Activated T-helper 2 cell treated with anti-CD3 and anti-CD28 coated beads, Interferon-gamma antibody, Interleukin-2, Interleukin-4, amounts not matched to agents 10 μg/mL and 5 μg/mL and 100 μg/mL, durations not matched to agents 14 hours and 24 hours and 36 hours (primary cell): ENCODE measurements at regions of chr3 and their contacts with region 1.

Region 1: DNA sequence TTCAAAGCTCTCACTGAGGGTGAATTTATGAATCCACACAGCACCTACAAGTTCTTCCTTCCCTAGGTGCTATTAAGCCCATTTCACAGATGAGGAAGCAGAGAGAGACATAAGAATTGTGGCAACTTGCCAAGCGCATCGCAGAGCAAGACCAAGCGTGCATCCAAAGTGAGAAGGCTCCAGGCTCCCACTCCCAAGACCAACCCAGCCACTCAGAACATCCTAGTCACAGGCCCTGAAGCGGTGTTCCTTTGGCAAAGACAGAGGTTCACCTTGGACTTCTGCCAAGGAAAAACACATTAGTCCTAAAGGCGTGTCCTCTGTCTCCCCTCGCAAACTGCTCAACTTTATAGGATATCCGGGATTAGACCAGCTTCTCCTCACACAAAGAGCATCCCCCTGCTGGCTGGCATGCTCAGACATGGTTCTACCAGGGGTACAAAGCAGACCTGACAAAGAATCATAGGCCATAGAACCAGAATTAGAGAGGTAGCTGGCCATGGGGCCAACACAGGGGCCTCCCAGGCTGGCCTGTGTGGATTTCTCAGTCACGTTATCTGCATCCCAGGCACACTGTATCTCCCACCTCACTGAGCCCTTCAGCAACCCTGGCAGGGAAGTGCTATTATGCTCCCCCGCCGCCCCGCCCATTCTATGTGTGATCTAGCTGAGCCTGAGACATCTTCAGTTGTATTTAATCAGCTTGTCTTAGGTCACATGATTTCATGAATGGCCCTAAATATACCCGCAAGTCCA is 160.2 kb downstream of the FOXP1 start:
- DNase-seq: no peak
- H3K4me3 Mint-ChIP-seq: no peak overlapping the region
- H3K27ac Mint-ChIP-seq: peak overlapping the region; percentile 83
- H3K4me1 Mint-ChIP-seq: peaks cover 61% of the 10 kb centered on the region
- H3K27me3 Mint-ChIP-seq: no peaks in the 10 kb centered on the region

Region 2: GRCh38 chr3:71380096-71380495 is 43.2 kb before region 1 on chr3:
- intact Hi-C with region 1: loop called (anchors 2 kb)
- DNase-seq: no peak
- H3K4me3 Mint-ChIP-seq: no peak overlapping the region
- H3K27ac Mint-ChIP-seq: peak overlapping the region; percentile 68
- H3K4me1 Mint-ChIP-seq: peaks cover 56% of the 10 kb centered on the region
- H3K27me3 Mint-ChIP-seq: no peaks in the 10 kb centered on the region

Region 3: GRCh38 chr3:71398157-71398836 is 25.0 kb before region 1 on chr3:
- intact Hi-C with region 1: loop called (anchors 1 kb)
- DNase-seq: no peak
- H3K4me3 Mint-ChIP-seq: no peak overlapping the region
- H3K27ac Mint-ChIP-seq: peak overlapping the region; percentile 50
- H3K4me1 Mint-ChIP-seq: peaks cover 45% of the 10 kb centered on the region
- H3K27me3 Mint-ChIP-seq: peaks cover 10% of the 10 kb centered on the region

Region 4: DNA sequence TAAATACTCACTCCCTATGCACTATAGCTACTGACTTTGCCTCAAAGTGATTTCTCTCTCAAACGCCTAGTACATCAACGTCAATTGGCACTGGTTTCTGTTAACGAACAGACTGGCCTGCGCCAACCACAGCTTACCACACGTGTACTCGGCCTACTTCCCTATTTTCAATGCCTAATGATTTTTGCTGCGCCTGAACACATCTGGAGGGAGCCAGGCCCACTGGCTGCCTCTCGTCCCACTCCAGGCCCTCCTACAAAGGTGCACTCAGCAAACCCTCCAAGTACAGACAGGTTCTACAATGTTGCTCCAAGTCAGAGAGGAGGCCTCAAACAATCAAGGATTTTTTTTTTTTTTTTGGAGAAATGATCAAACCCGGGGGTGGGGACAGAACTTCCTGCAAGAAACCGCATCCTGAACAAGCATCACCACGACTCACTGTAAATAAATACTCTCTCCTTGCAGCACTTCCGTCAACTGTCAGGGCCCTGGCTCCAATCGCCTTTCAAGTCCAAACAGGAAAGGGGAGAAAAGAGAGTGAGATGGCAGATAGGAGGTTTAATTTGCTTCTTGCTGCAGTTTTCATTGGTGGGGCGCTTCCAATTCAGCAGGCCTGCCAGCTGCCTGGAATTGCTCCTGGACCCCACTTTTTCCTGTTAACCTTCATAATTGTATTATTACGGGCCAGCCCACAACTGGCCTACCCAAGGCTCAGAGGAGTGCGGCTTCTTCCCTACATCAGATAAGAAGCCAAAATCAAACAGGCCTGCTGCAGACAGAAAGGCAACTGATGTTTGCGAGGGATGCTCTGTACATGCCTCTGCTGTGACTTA is 20.9 kb after region 1 on chr3:
- intact Hi-C with region 1: loop called (anchors 2 kb)
- DNase-seq: peak; percentile 79
- H3K4me3 Mint-ChIP-seq: peak overlapping the region; percentile 71
- H3K27ac Mint-ChIP-seq: peak overlapping the region; percentile 99
- H3K4me1 Mint-ChIP-seq: peaks cover 86% of the 10 kb centered on the region
- H3K27me3 Mint-ChIP-seq: no peaks in the 10 kb centered on the region